Natural killer cell (primary cell): ENCODE measurements at regions of chr12 and their contacts with region 1.

Region 1: GRCh38 chr12:116236148-116236731 is 41.3 kb downstream of the MED13L start:
- DNase-seq: peak; percentile 40 to 76
- ATAC-seq: peak; percentile 62 to 90 (median 82)
- H3K4me3 ChIP-seq: no peak overlapping the region
- H3K4me3 Mint-ChIP-seq: peak overlapping the region; percentile 45
- H3K27ac ChIP-seq: no peak overlapping the region
- H3K27ac Mint-ChIP-seq: peak overlapping the region; percentile 73 to 80
- H3K4me1 ChIP-seq: no peaks in the 10 kb centered on the region
- H3K4me1 Mint-ChIP-seq: peaks cover 29 to 35% of the 10 kb centered on the region in 2 donors
- H3K27me3 ChIP-seq: no peaks in the 10 kb centered on the region
- H3K27me3 Mint-ChIP-seq: no peaks in the 10 kb centered on the region
- CTCF ChIP-seq: peak; percentile 67

Region 2: GRCh38 chr12:115998119-115998633 is 238.1 kb before region 1 on chr12:
- intact Hi-C with region 1: loop called (anchors 2 kb)
- DNase-seq: peak in 1 of 2 donors; percentile 71
- ATAC-seq: peak; percentile 49 to 61 (median 50)
- H3K4me3 ChIP-seq: no peak overlapping the region
- H3K4me3 Mint-ChIP-seq: no peak overlapping the region
- H3K27ac ChIP-seq: no peak overlapping the region
- H3K27ac Mint-ChIP-seq: no peak overlapping the region
- H3K4me1 ChIP-seq: no peaks in the 10 kb centered on the region
- H3K4me1 Mint-ChIP-seq: no peaks in the 10 kb centered on the region
- H3K27me3 ChIP-seq: no peaks in the 10 kb centered on the region
- H3K27me3 Mint-ChIP-seq: no peaks in the 10 kb centered on the region
- CTCF ChIP-seq: peak; percentile 90

Region 3: DNA sequence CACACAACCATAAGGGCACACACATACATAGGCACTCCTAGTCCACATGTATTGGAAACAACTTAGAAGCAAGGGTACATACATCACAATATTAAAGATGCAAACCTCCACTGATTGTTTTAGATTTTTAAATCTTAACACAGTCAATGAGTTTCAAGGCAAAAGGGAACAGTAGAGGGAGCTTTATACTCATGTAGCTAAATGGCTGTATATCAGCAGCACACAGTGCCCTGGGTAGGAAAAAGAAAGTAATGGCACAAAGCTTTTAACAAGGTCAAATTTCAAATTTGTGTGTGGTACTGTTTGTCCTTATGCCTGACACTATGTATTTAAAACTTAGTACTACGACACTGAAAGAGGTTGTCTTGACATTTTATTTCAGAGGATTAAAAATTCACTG is 220.7 kb before region 1 on chr12:
- intact Hi-C with region 1: loop called (anchors 1 kb)
- DNase-seq: peak in 1 of 2 donors; percentile 42
- ATAC-seq: peak; percentile 41 to 75 (median 64)
- H3K4me3 ChIP-seq: no peak overlapping the region
- H3K4me3 Mint-ChIP-seq: no peak overlapping the region
- H3K27ac ChIP-seq: no peak overlapping the region
- H3K27ac Mint-ChIP-seq: no peak overlapping the region
- H3K4me1 ChIP-seq: no peaks in the 10 kb centered on the region
- H3K4me1 Mint-ChIP-seq: peaks cover 4 to 5% of the 10 kb centered on the region in 2 donors
- H3K27me3 ChIP-seq: no peaks in the 10 kb centered on the region
- H3K27me3 Mint-ChIP-seq: no peaks in the 10 kb centered on the region
- CTCF ChIP-seq: no peak

Region 4: GRCh38 chr12:116066381-116067230 is 169.6 kb before region 1 on chr12:
- intact Hi-C with region 1: loop called (anchors 1 kb)
- DNase-seq: peak; percentile 42 to 80
- ATAC-seq: peak; percentile 83 to 94 (median 84)
- H3K4me3 ChIP-seq: no peak overlapping the region
- H3K4me3 Mint-ChIP-seq: no peak overlapping the region
- H3K27ac ChIP-seq: no peak overlapping the region
- H3K27ac Mint-ChIP-seq: peak overlapping the region; percentile 13 to 50
- H3K4me1 ChIP-seq: peaks cover under 1% of the 10 kb centered on the region
- H3K4me1 Mint-ChIP-seq: peaks cover 41 to 44% of the 10 kb centered on the region in 2 donors
- H3K27me3 ChIP-seq: no peaks in the 10 kb centered on the region
- H3K27me3 Mint-ChIP-seq: no peaks in the 10 kb centered on the region
- CTCF ChIP-seq: peak; percentile 95

Region 5: DNA sequence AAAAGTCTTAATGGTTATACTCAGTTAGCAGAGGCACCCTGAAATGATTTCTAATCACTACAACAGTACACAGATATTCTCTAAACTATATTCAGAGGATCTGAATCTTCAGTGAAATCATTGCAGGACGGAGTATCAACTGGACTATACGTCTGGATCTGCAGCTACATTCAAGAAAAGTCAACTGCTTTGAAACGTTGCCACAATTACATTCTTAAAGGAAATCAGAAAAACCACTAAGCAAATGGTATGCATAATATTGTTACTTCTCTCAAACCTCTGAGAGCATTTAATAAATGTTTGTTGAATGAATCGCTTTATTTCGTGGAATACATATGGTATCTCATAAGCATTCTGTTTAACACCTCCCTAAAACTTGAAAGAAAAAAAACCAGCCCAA is 26.1 kb before region 1 on chr12:
- intact Hi-C with region 1: no loop called
- DNase-seq: no peak
- ATAC-seq: no peak
- H3K4me3 ChIP-seq: no peak overlapping the region
- H3K4me3 Mint-ChIP-seq: peak overlapping the region; percentile 41
- H3K27ac ChIP-seq: no peak overlapping the region
- H3K27ac Mint-ChIP-seq: peak overlapping the region in 1 of 2 donors; percentile 26
- H3K4me1 ChIP-seq: peaks cover 2% of the 10 kb centered on the region
- H3K4me1 Mint-ChIP-seq: peaks cover 69 to 75% of the 10 kb centered on the region in 2 donors
- H3K27me3 ChIP-seq: no peaks in the 10 kb centered on the region
- H3K27me3 Mint-ChIP-seq: no peaks in the 10 kb centered on the region
- CTCF ChIP-seq: no peak

Region 6: DNA sequence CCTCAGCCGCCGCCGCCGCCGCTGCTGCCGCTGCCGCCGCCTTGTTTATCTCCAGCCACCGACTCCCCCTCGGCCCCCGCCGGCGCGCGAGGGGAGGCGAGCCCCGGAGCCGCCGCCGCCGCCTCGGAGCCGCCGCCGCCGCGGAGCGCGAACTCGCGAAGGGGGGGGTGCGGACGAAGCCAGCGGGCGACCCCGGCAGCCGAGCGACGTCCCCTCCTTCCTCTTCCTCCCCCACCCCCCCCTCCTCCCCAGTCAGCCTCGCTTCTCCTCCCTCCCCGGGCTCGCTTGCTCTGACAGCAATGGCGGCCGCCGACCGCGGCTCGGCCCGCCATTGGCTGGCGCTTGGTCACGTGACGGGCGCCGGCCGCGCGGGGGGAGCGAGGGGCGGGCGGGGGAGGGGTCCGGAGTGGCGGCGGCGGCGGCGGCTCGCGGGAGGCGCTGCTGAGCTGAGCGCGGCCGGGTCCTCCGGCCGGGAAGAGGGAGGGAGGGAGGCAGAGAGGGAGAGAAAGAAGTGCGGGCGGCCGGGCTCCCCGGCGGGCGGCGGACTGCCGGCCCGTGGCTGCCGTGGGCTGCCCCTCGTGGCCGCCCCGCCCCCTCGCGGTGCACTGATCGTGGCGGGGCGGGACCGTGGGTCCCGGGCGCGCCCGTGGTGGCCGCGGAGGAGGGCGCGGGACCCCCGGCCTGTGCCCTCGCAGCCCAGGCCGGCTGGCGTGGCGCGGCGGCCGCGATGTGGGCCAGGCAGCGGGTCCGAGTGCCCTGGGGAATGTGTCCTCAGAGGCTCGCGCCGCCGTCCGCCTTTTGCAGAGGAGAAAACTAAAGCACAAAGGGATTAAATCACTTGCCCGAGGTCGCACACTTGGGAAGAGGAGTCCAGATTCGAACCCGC is 41.4 kb after region 1 on chr12 and contains the start of gene MED13L:
- intact Hi-C with region 1: loop called (anchors 5 kb)
- DNase-seq: peak; percentile 92 to 93
- ATAC-seq: peak; percentile 80 to 90 (median 86)
- H3K4me3 ChIP-seq: peak within 1 kb of the TSS; percentile 92
- H3K4me3 Mint-ChIP-seq: peak within 1 kb of the TSS; percentile 96
- H3K27ac ChIP-seq: peak within 1 kb of the TSS; percentile 50
- H3K27ac Mint-ChIP-seq: peak within 1 kb of the TSS; percentile 88 to 93
- H3K4me1 ChIP-seq: peaks cover 15% of the 10 kb centered on the region
- H3K4me1 Mint-ChIP-seq: peaks cover 43% of the 10 kb centered on the region in 2 donors
- H3K27me3 ChIP-seq: no peaks in the 10 kb centered on the region
- H3K27me3 Mint-ChIP-seq: no peaks in the 10 kb centered on the region
- CTCF ChIP-seq: peak; percentile 19
- total RNA-seq, gene MED13L: 237 to 316 (median 240) TPM